ENCODE measurements at regions of chr1 and their contacts with region 1.

Region 1: DNA sequence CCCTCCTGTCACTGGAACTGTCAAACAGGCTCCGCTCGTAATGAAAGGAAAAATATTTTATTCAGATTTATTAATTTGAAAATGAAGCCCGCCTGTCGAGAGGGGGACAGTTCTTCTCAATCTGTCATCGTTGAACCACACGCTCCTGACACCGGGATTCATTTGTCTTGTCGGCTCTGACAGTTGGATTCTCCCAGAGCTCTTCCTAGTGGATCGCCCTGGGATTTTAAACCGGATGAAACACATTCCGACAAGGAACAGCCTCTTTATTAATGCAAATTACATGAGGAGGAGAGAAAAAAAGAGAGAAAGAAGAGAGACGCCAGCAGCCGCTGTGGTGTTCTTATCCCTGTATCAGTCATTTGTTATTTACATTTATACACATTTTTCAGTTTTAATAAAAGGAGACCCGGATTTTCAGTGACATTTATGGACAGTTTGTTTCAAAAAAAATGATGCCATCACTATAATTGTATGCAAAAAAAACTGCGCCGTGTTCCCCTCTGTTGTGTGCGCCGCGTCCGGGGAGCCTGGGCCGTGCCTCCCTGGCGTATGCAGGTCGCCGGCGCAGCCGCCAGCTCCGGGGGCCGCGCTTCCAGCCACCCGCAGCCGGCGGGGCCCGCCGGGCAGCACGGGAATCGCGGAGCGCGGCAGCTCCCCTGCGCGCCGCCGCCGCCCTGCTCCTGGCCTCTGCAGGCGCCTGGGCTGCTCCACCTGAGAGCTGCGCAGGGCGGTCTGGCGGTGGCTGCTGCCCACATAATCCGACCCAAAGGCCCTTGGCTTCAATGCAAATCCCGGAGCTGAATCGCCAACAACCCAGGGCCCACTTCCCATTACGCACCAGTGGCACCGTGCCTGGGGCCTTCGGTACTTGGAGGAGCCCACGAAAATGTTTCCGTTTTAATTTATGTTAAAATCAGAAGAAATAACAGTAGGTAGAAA is 237.9 kb upstream of the PBX1 start:
- DNase-seq: no peak
- ATAC-seq: no peak
- H3K4me3 Mint-ChIP-seq: no peak overlapping the region
- H3K27ac Mint-ChIP-seq: no peak overlapping the region
- H3K4me1 Mint-ChIP-seq: no peaks in the 10 kb centered on the region
- H3K27me3 Mint-ChIP-seq: peaks cover 10% of the 10 kb centered on the region

Region 2: GRCh38 chr1:162854245-162854882 is 1466.7 kb before region 1 on chr1:
- CTCF ChIA-PET with region 1: no interaction called
- POLR2A ChIA-PET with region 1: no interaction called
- intact Hi-C with region 1: loop called in 1 of 2 experiments (anchors 10 kb)
- DNase-seq: peak; percentile 71
- ATAC-seq: peak; percentile 58
- H3K4me3 Mint-ChIP-seq: no peak overlapping the region
- H3K27ac Mint-ChIP-seq: no peak overlapping the region
- H3K4me1 Mint-ChIP-seq: no peaks in the 10 kb centered on the region
- H3K27me3 Mint-ChIP-seq: peaks cover 1% of the 10 kb centered on the region